ENCODE measurements at regions of chr5 and their contacts with region 1.

Region 1: DNA sequence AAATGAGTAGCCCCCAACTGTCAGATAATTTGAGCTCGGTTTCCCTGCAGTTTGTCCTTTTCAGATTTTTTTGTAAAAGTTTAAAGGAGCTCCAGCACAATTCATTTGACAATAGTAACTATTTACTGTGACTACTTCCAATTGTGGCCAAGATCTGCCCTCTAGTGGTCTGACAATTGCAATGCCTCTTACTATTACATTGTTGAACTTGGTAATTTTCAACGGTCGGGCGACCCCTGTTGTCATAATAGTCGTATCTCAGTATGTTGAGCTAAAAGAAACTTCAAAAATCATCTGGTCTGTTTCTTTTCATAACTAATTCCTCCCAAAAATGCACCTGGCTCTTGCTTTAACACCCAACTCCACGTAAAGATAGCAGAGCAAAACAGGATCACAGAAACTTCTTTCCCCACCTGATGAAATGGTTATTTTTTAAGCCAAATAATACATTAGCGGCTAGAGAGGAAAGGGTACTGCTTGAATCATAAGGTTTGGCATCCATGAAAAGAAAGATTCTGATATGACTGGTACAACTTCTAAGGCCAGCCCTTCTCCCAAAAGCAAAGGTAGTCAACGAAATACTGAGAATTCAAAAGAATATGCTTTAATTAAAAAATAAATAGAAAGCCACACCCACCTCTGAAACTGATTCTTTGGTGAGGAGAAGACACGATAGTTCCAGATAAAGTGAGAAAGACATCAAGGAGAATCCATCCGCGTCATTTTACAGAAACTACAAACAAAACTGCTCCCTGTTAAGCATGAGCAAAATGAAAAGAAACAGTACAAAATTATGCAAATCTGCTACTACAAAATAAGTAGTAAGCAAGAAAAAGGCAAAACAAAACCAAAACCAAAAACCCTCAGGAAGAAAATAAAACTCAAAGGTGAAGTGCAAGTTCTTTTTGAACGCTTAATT is 76.9 kb upstream of the HTR4 start:
- DNase-seq: peak; percentile 34 to 54
- H3K4me3 ChIP-seq: no peak overlapping the region
- H3K27ac ChIP-seq: no peak overlapping the region
- H3K4me1 ChIP-seq: no peaks in the 10 kb centered on the region
- H3K27me3 ChIP-seq: no peaks in the 10 kb centered on the region
- CTCF ChIP-seq: peak in 2 of 3 experiments; percentile 92 to 98; a peak in 3 of 4 replicates
- EP300 ChIP-seq: no peak
- POLR2A ChIP-seq: no peak
- RAD21 ChIP-seq: peak; percentile 94 to 95

Region 2: DNA sequence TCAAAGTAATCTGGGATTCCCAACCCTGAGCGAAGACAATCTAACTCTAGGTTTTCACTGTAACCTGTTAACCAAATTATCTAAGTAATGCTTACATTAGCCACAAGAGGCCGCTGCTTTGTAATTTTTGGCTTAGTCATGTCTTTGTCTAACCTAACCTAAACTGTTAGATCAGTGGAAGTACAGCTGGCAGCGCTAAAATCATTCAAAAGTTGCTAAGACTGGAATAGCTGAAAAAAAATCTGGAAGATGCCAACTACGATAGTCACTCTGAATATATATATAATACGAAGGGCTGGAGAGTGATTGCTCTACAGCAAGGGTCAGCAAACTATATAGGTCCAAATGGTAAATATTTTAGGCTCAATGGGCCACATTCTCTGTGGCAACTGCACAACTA is 287.2 kb before region 1 on chr5:
- CTCF ChIA-PET with region 1: interaction called, 231 read pairs
- POLR2A ChIA-PET with region 1: interaction called, 3 read pairs
- DNase-seq: no peak
- H3K4me3 ChIP-seq: no peak overlapping the region
- H3K27ac ChIP-seq: no peak overlapping the region
- H3K4me1 ChIP-seq: no peaks in the 10 kb centered on the region; a peak in 1 of 7 replicates
- H3K27me3 ChIP-seq: no peaks in the 10 kb centered on the region
- CTCF ChIP-seq: peak in 2 of 3 experiments; percentile 71 to 80; a peak in 3 of 4 replicates
- EP300 ChIP-seq: no peak
- POLR2A ChIP-seq: no peak
- RAD21 ChIP-seq: peak; percentile 82 to 86

Region 3: GRCh38 chr5:148491015-148491792 is 240.0 kb before region 1 on chr5:
- CTCF ChIA-PET with region 1: interaction called, 11 read pairs
- POLR2A ChIA-PET with region 1: no interaction called
- DNase-seq: no peak
- H3K4me3 ChIP-seq: no peak overlapping the region
- H3K27ac ChIP-seq: no peak overlapping the region
- H3K4me1 ChIP-seq: no peaks in the 10 kb centered on the region
- H3K27me3 ChIP-seq: no peaks in the 10 kb centered on the region; a peak in 1 of 7 replicates
- CTCF ChIP-seq: no peak
- EP300 ChIP-seq: no peak
- POLR2A ChIP-seq: no peak
- RAD21 ChIP-seq: no peak

Region 4: GRCh38 chr5:148719605-148720004 is 11.6 kb before region 1 on chr5:
- CTCF ChIA-PET with region 1: interaction called, 73 read pairs
- POLR2A ChIA-PET with region 1: interaction called, 3 read pairs
- DNase-seq: no peak
- H3K4me3 ChIP-seq: no peak overlapping the region
- H3K27ac ChIP-seq: no peak overlapping the region
- H3K4me1 ChIP-seq: peaks cover 0 to 3% (median 0%) of the 10 kb centered on the region in 4 experiments; a peak in 1 of 7 replicates
- H3K27me3 ChIP-seq: no peaks in the 10 kb centered on the region
- CTCF ChIP-seq: no peak
- EP300 ChIP-seq: no peak
- POLR2A ChIP-seq: no peak
- RAD21 ChIP-seq: no peak

Region 5: DNA sequence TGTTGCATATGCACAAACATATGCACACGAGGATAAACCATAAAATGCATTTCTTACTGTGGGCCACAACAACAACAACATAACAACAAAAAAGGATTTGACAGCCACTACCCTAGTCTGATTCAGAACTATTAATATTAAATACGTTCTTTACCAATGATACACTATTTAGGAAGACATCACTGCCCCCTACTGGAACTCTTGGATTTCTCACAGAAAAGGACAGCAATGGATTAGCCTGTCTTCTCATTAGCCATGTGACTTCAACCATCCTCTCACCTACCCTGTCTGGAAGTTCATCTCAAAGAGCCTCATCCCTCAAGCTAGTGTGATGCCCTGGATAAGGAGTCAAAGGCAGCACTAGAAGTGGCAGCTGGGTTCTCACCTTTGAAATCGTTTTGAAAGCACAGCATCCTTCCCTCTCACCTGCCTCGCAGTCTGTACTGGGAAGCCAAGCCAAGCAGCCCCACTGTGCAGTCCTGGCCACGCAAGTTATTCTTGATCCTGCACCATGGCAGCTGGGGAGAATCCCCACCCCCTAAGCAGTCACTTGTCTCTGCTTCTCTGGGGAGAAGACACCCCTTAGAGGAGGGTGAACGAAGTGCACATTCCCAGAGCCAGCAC is 267.1 kb after region 1 on chr5:
- CTCF ChIA-PET with region 1: interaction called, 61 read pairs
- POLR2A ChIA-PET with region 1: no interaction called
- DNase-seq: no peak
- H3K4me3 ChIP-seq: no peak overlapping the region
- H3K27ac ChIP-seq: no peak overlapping the region
- H3K4me1 ChIP-seq: no peaks in the 10 kb centered on the region; a peak in 1 of 7 replicates
- H3K27me3 ChIP-seq: no peaks in the 10 kb centered on the region
- CTCF ChIP-seq: peak in 2 of 3 experiments; percentile 56 to 72; a peak in 2 of 4 replicates
- EP300 ChIP-seq: no peak
- POLR2A ChIP-seq: no peak
- RAD21 ChIP-seq: peak; percentile 70 to 74

Region 6: GRCh38 chr5:149053072-149053695 is 322.0 kb after region 1 on chr5:
- CTCF ChIA-PET with region 1: interaction called, 13 read pairs
- POLR2A ChIA-PET with region 1: no interaction called
- DNase-seq: no peak
- H3K4me3 ChIP-seq: no peak overlapping the region
- H3K27ac ChIP-seq: no peak overlapping the region
- H3K4me1 ChIP-seq: no peaks in the 10 kb centered on the region
- H3K27me3 ChIP-seq: no peaks in the 10 kb centered on the region
- CTCF ChIP-seq: no peak
- EP300 ChIP-seq: no peak
- POLR2A ChIP-seq: no peak
- RAD21 ChIP-seq: no peak

Measured in H1 (cell line).